ENCODE measurements at regions of chr14 and their contacts with region 1.

Region 1: GRCh38 chr14:77376771-77377501 is at the starts of genes SAMD15 and TMED8:
- DNase-seq: peak; percentile 61 to 93 (median 79)
- ATAC-seq: peak; percentile 96
- H3K4me3 ChIP-seq: peak within 1 kb of the TSS; percentile 78
- H3K4me3 Mint-ChIP-seq: peak within 1 kb of the TSS; percentile 95
- H3K27ac ChIP-seq: peak within 1 kb of the TSS; percentile 67 to 89
- H3K27ac Mint-ChIP-seq: peak within 1 kb of the TSS; percentile 74
- H3K4me1 ChIP-seq: peaks cover 21% of the 10 kb centered on the region
- H3K4me1 Mint-ChIP-seq: peaks cover 41% of the 10 kb centered on the region
- H3K27me3 ChIP-seq: no peaks in the 10 kb centered on the region
- H3K27me3 Mint-ChIP-seq: no peaks in the 10 kb centered on the region
- CTCF ChIP-seq: no peak
- total RNA-seq, gene SAMD15: 0.34 TPM in 1 of 2 experiments, not detected in the other
- total RNA-seq, gene TMED8: 4.9 to 5.1 TPM

Region 2: DNA sequence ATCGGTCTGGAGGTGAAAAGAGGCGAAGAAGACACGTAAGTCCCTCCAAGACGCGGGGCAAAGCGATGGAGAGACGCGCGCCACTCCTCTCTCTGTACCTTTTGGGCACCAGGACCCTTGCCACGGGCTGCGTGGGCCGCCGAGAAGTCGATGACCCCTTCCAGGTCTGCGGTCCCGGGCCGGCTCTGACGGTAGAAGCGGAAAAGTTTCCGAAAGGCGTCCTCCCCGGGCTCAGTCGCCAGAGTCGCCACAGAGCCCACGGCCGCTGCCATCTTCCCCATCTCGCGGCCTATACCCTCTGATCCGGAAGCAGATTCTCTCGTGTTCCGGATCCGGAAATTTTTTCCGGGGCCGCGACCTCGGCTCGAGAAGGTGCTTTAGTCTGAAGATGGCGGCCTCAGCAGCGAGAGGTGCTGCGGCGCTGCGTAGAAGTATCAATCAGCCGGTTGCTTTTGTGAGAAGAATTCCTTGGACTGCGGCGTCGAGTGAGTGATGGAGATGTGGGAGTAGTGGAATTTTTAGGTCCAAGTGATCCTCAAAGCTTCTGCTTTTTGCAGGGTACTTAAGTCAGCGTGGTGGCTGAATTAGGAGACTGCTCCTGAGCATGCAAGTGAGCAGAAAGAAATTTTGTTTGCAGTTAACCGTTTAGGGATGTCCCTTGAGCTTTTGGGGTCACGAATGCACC is 330.9 kb after region 1 on chr14 and contains the starts of genes ALKBH1 and SLIRP:
- CTCF ChIA-PET with region 1: no interaction called
- POLR2A ChIA-PET with region 1: interaction called, 4 read pairs
- intact Hi-C with region 1: loop called in 1 of 2 experiments (anchors 5 kb)
- DNase-seq: peak; percentile 79 to 93 (median 84)
- ATAC-seq: peak; percentile 98
- H3K4me3 ChIP-seq: peak within 1 kb of the TSS; percentile 82
- H3K4me3 Mint-ChIP-seq: peak within 1 kb of the TSS; percentile 95
- H3K27ac ChIP-seq: peak within 1 kb of the TSS; percentile 10 to 65
- H3K27ac Mint-ChIP-seq: peak within 1 kb of the TSS; percentile 87
- H3K4me1 ChIP-seq: peaks cover 19% of the 10 kb centered on the region
- H3K4me1 Mint-ChIP-seq: peaks cover 54% of the 10 kb centered on the region
- H3K27me3 ChIP-seq: no peaks in the 10 kb centered on the region
- H3K27me3 Mint-ChIP-seq: no peaks in the 10 kb centered on the region
- CTCF ChIP-seq: no peak
- total RNA-seq, gene ALKBH1: 5.6 to 8.5 TPM
- total RNA-seq, gene SLIRP: 46.8 to 49.7 TPM